Thyroid gland (tissue), 4 donors: ENCODE measurements at regions of chr12 and their contacts with region 1.

Region 1: DNA sequence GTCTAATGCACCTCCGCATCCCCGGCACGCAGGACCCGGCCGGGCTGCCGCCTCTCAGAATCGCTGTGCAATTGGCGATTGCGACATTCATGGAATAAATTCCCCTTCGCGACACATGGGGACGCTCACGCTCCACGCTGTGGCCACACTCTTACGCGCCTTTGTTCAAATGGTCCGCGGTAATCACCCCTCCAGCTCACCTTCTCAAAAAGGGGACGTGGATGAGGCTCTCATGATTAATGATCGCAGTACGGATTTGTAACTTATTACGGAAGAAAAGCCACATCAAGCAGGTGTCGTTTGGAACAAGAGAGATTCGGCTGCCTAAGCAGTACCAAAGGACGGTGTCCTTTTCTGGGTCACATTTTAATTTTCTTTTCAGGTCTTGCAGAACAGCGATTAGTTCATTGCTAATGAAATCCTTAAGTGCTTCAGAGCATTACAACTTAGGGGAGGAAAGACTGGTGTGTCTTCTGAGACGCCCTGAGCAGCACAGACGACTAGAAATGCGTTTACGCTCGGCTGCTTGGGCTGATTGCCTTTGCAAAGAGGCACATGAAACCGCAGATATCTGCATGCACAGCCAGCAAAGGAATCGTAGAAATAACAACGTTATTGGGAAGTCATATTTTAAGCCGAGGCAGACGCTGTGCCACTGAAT is 37.3 kb upstream of the ADGRD1 start:
- DNase-seq: peak; percentile 63 to 68
- H3K4me3 ChIP-seq: peak overlapping the region in 1 of 3 donors; percentile 21
- H3K27ac ChIP-seq: peak overlapping the region in 1 of 3 donors; percentile 11
- H3K4me1 ChIP-seq: peaks cover 0 to 8% of the 10 kb centered on the region in 2 donors
- H3K27me3 ChIP-seq: no peaks in the 10 kb centered on the region
- CTCF ChIP-seq: peak; percentile 95 to 99 (median 98)
- POLR2A ChIP-seq: no peak

Region 2: DNA sequence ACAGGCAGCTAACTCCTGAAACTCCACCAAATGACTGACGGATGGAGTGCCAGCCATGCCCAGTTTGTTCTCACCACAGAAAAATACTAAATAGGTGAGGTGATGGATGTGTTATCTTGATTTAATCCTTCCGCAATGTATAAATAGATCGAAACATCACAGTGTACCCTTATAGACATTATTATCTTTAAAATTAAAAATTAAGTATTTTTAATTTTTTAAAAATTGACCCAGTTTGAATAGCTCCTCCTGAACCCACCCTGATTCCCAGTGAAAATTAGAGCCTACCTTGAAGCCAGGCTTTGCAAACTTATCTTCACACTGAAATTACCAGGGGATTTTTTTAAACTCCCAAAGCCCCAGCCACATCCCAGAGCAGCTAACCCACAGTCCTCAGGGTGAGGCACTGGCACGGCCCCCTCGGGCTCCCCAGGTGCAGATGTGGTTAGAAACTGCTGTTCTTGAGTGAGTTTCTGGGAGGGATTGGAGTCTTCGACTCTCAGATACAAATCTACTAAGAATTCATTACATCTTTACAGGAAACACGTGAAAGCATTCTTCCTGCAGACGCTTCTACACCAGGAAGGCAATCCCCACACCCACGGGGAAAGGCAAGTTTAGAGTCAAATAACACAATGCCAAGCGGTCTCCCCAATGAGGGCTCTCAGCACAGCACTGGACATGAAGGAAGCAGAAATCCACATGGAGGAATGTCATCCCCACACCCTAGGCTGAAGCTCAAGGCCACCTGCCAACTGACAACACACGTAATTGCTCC is 326.7 kb before region 1 on chr12:
- intact Hi-C with region 1: no loop called
- DNase-seq: no peak
- H3K4me3 ChIP-seq: no peak overlapping the region
- H3K27ac ChIP-seq: no peak overlapping the region
- H3K4me1 ChIP-seq: no peaks in the 10 kb centered on the region
- H3K27me3 ChIP-seq: no peaks in the 10 kb centered on the region
- CTCF ChIP-seq: no peak
- POLR2A ChIP-seq: no peak

Region 3: GRCh38 chr12:131132118-131132892 is 215.9 kb after region 1 on chr12:
- intact Hi-C with region 1: loop called (anchors 5 kb)
- DNase-seq: peak; percentile 86 to 88
- H3K4me3 ChIP-seq: no peak overlapping the region
- H3K27ac ChIP-seq: no peak overlapping the region
- H3K4me1 ChIP-seq: peaks cover 5 to 10% of the 10 kb centered on the region in 2 donors
- H3K27me3 ChIP-seq: no peaks in the 10 kb centered on the region
- CTCF ChIP-seq: peak; percentile 49 to 85 (median 78)
- POLR2A ChIP-seq: no peak